ENCODE measurements at regions of chr10 and their contacts with region 1.

Region 1: GRCh38 chr10:96089670-96090462 is 40.2 kb upstream of the ZNF518A start:
- DNase-seq: peak; percentile 95
- H3K4me3 ChIP-seq: peak overlapping the region; percentile 53 to 75 (median 68)
- H3K27ac ChIP-seq: peak overlapping the region; percentile 88 to 94 (median 93)
- H3K4me1 ChIP-seq: peaks cover 3 to 15% (median 5%) of the 10 kb centered on the region in 4 donors
- H3K27me3 ChIP-seq: peaks cover 37% of the 10 kb centered on the region
- CTCF ChIP-seq: no peak
- EP300 ChIP-seq: no peak
- POLR2A ChIP-seq: peak; percentile 82

Region 2: DNA sequence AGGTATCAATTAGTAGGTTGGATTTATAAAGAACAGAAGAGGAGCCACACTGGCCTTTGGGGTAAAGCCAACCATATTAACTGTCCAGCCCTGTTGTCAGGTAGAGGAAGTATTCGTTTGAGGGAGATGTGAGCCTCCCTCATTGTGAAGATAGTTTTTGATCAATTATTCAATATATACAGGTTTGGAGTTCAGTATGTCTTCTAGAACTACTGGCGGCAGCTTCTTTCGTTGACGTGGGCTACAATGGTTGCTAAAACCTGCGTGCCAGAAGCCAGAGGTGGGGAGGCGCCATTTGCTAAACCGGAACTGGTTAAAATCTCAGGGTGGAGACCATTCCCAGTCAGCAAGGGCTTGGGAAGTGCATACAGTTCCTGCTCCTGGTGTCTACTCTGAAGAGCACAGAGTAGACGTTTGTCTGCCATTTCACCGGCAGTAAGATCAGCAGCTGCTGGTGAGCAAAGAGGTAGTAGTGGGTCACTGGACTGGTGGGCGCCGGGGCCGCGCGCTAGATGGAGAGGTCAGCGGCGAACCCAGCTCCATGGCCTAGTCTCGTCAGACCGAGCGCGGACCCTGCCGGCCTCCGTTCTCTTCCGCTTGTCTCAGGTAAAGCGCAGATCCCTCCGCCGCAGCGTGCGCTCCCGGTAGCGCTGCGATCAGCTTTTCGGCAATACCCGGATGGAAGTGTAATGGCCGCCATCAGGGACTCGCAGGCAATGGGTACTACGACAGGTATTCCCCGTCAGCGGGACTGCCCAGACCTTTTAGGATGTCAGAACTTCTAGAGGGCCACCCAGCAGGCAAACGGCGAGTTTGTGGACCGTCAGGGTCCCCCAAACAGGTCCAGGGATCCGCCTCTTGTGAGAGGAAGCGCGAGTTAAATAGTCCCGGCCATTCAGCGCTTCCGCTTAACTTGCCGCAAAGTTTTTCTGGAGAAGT is 39.8 kb after region 1 on chr10 and contains the start of gene ZNF518A:
- in situ Hi-C with region 1: loop called in 1 of 4 experiments (anchors 5 kb)
- intact Hi-C with region 1: no loop called
- DNase-seq: peak; percentile 94
- H3K4me3 ChIP-seq: peak within 1 kb of the TSS; percentile 62 to 80 (median 72)
- H3K27ac ChIP-seq: peak within 1 kb of the TSS; percentile 93 to 95 (median 95)
- H3K4me1 ChIP-seq: peaks cover 5 to 25% (median 9%) of the 10 kb centered on the region in 4 donors
- H3K27me3 ChIP-seq: peaks cover 40% of the 10 kb centered on the region
- CTCF ChIP-seq: no peak
- EP300 ChIP-seq: no peak
- POLR2A ChIP-seq: peak; percentile 66
- total RNA-seq, gene ZNF518A: 19.5 to 44.6 (median 36.8) TPM

Region 3: GRCh38 chr10:96339957-96340904 is 250.4 kb after region 1 on chr10:
- in situ Hi-C with region 1: no loop called
- intact Hi-C with region 1: no loop called
- DNase-seq: peak; percentile 69
- H3K4me3 ChIP-seq: no peak overlapping the region
- H3K27ac ChIP-seq: no peak overlapping the region
- H3K4me1 ChIP-seq: no peaks in the 10 kb centered on the region
- H3K27me3 ChIP-seq: no peaks in the 10 kb centered on the region
- CTCF ChIP-seq: peak in 4 of 5 experiments; percentile 52 to 65 (median 58)
- EP300 ChIP-seq: no peak
- POLR2A ChIP-seq: no peak